ENCODE measurements at regions of chr12 and their contacts with region 1.

Region 1: DNA sequence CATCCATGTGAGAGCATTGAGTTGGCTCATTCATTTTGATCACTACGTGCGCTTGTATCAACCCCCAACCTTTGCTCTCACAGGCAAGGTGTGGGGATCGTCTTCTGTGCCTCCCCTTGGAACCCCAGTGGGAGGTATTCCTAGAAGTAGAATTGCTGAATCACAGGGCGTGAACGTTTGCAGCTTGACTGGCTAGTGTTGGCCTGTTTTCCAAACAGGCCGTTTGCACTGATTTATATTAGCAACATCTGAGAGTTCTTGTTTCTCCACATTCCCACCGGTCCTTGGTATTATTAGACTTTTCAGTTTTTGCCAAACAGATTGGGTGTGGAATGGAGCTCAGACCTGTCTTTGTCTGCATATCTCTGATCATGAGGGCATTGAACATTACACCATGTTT is 288.6 kb upstream of the PWP1 start:
- DNase-seq: peak; percentile 72 to 96
- H3K4me3 ChIP-seq: 0 out of 2 replicates have a peak overlapping the region, but pooled peaks have one; percentile 9
- H3K27ac ChIP-seq: peak overlapping the region; percentile 76
- H3K4me1 ChIP-seq: peaks cover 41% of the 10 kb centered on the region
- H3K27me3 ChIP-seq: no peaks in the 10 kb centered on the region
- CTCF ChIP-seq: no peak

Region 2: GRCh38 chr12:107328442-107329133 is 68.4 kb before region 1 on chr12:
- CTCF ChIA-PET with region 1: no interaction called
- POLR2A ChIA-PET with region 1: no interaction called
- intact Hi-C with region 1: loop called (anchors 1 kb)
- DNase-seq: peak; percentile 39 to 42
- H3K4me3 ChIP-seq: no peak overlapping the region
- H3K27ac ChIP-seq: no peak overlapping the region
- H3K4me1 ChIP-seq: peaks cover 43% of the 10 kb centered on the region
- H3K27me3 ChIP-seq: no peaks in the 10 kb centered on the region
- CTCF ChIP-seq: no peak

Region 3: DNA sequence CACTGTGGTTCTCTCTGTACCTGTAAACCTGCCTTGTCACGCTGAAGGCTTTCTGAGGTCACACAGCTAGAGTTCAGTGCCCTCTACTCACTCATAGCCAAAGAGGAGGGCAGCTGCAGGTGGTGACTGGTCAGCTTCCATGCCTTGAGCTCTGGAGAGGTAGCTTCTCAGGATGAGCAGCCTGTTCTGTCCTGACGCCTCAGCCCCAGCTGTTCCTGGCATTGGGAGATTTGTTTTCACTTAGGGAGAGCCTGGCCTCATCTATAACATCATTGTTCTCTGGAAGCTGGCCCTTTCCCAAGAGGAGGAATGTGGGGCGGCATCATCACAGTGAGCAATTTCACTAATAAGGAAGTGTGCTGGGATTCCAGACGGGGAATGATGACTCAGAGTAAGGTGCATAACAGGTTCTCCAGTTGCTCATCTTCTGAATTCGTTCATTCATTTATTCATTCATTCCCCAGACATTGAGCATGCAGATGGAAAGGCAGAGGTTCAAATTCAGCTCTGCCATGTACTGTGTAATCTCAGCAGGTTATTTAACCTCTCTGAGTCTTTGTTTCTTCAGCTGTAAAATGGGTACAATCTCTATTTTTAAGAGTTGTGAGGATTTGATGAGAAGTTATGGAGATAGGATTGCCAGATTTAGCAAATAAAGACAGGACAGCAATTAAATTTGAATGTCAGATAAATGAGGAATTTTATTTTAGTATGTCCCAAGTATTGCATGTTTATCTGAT is 47.8 kb before region 1 on chr12:
- CTCF ChIA-PET with region 1: no interaction called
- POLR2A ChIA-PET with region 1: interaction called, 10 read pairs
- intact Hi-C with region 1: loop called (anchors 1 kb)
- DNase-seq: peak; percentile 87 to 98
- H3K4me3 ChIP-seq: peak overlapping the region; percentile 18; the same call in 1 of the 2 replicates
- H3K27ac ChIP-seq: peak overlapping the region; percentile 97
- H3K4me1 ChIP-seq: peaks cover 95% of the 10 kb centered on the region
- H3K27me3 ChIP-seq: no peaks in the 10 kb centered on the region
- CTCF ChIP-seq: no peak

Region 4: GRCh38 chr12:107379852-107380567 is 17.0 kb before region 1 on chr12:
- CTCF ChIA-PET with region 1: interaction called, 5 read pairs
- POLR2A ChIA-PET with region 1: interaction called, 5 read pairs
- intact Hi-C with region 1: loop called (anchors 2 kb)
- DNase-seq: peak; percentile 58 to 89
- H3K4me3 ChIP-seq: peak overlapping the region; percentile 44; the same call in 1 of the 2 replicates
- H3K27ac ChIP-seq: peak overlapping the region; percentile 82
- H3K4me1 ChIP-seq: peaks cover 34% of the 10 kb centered on the region
- H3K27me3 ChIP-seq: no peaks in the 10 kb centered on the region
- CTCF ChIP-seq: no peak

Measured in PC-9 (cell line).